Cardiac septum (tissue), 1 donor: ENCODE measurements at regions of chr1 and their contacts with region 1.

Region 1: GRCh38 chr1:243748706-243749283 is 101.2 kb downstream of the AKT3 start:
- DNase-seq: no peak

Region 2: GRCh38 chr1:243482141-243483022 is 266.4 kb before region 1 on chr1:
- intact Hi-C with region 1: loop called (anchors 10 kb)
- DNase-seq: no peak

Region 3: GRCh38 chr1:243620096-243620495 is 128.7 kb before region 1 on chr1:
- intact Hi-C with region 1: no loop called
- DNase-seq: no peak